ENCODE measurements at regions of chr5 and their contacts with region 1.

Region 1: DNA sequence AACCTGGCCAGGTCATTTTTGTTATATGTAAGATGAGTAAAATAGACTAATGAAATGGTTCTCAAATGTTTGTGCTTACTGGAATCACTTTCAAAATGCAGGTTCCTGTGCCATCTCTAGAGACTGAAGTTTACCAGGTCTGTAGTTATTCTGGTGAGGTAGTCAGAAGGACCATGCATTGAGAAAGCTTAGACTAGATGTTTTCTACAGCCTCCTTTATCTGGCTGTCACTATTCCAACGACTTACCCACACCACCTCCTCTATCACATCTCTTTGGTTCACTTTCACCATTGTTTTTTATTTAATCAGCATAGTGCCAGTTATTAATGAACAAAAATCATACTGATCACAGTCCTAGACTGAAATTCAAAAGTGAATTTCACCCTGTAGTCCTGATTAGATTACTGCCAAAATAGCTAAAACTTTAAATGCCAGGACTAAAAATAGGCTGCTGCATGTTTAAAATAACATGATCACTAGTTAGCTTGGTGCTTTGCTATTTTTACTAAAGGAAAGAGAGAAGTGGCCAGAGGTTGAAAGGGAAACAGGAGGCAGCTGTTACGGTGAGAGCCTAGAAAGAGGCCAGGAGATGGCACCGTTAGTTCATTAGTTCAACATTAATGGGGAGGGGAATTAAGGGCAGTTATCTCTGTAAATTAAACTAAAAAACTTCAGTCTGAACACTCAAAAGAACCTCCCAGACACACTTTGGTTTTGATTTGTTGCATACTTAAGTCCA is 13.9 kb upstream of the FNIP1 start:
- DNase-seq: peak; percentile 29
- ATAC-seq: peak; percentile 76
- H3K4me3 ChIP-seq: no peak overlapping the region
- H3K27ac ChIP-seq: no peak overlapping the region
- H3K4me1 ChIP-seq: peaks cover 0 to 9% of the 10 kb centered on the region in 2 experiments; a peak in 2 of 4 replicates
- H3K27me3 ChIP-seq: no peaks in the 10 kb centered on the region
- CTCF ChIP-seq: peak; percentile 27 to 77 (median 53); a peak in 4 of 6 replicates
- POLR2A ChIP-seq: no peak
- RAD21 ChIP-seq: peak; percentile 85

Region 2: DNA sequence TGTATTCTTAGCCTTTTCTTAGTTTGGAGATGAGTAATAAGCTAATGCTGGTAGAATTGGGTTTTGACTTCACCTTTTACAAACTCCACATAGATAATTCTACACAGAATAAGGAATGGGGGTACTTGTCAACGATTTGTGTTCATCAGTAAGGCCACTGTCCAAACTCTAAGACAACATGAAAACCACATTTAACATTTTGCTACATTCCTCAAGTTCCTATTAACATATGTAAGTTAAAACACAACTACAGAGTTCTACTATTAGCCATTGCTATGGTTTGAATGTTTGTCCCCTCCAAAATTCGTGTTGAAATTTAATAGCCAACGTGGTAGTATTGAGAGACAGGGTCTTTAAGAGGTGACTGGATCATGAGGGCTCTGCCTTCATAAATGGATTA is 102.9 kb after region 1 on chr5:
- CTCF ChIA-PET with region 1: no interaction called
- POLR2A ChIA-PET with region 1: no interaction called
- RAD21 ChIA-PET with region 1: no interaction called
- intact Hi-C with region 1: no loop called
- DNase-seq: no peak
- ATAC-seq: no peak
- H3K4me3 ChIP-seq: no peak overlapping the region
- H3K27ac ChIP-seq: no peak overlapping the region
- H3K4me1 ChIP-seq: no peaks in the 10 kb centered on the region
- H3K27me3 ChIP-seq: no peaks in the 10 kb centered on the region
- CTCF ChIP-seq: no peak
- POLR2A ChIP-seq: no peak
- RAD21 ChIP-seq: no peak

Region 3: DNA sequence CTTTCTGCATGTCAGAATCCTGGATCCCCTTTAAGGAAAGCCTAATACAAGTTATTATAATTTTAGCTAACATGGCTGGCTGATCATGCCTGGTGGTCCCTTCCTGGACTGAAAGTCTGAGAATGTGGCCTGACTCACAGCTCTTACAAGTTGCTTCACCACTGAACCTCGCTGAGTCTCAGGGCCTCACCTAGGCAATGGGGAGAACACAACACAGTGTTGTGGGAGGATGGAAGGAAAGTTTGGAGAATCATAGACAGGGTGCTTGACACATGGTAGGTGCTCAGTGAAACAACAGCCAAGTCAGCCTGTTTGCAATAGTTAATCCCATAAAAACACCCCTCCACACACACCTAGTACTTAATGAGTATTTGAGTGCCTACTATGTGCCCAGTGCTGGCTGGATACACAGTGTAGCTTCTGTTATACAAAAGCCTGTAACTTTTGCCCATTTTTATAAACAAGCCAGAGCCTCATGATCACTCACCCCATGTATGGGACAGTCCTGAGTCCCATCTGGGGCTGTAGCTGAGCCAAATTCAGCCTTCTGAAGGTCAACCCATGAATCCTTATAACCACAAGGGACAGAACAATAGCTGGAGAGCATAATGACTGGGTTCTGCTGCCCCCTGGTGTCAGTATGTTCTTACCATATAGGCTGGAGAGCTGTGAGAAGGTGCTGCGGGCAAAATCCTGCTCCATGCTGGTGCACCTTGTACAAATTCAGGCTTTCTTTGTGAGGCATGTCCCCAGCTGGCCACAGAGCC is 196.9 kb after region 1 on chr5:
- CTCF ChIA-PET with region 1: interaction called, 70 read pairs
- POLR2A ChIA-PET with region 1: no interaction called
- RAD21 ChIA-PET with region 1: interaction called, 6 to 13 read pairs
- intact Hi-C with region 1: loop called (anchors 1 kb)
- DNase-seq: peak; percentile 72
- ATAC-seq: peak; percentile 84
- H3K4me3 ChIP-seq: no peak overlapping the region
- H3K27ac ChIP-seq: no peak overlapping the region
- H3K4me1 ChIP-seq: peaks cover 0 to 7% of the 10 kb centered on the region in 2 experiments; a peak in 2 of 4 replicates
- H3K27me3 ChIP-seq: no peaks in the 10 kb centered on the region
- CTCF ChIP-seq: peak; percentile 74 to 88 (median 74)
- POLR2A ChIP-seq: no peak
- RAD21 ChIP-seq: peak; percentile 95

Region 4: DNA sequence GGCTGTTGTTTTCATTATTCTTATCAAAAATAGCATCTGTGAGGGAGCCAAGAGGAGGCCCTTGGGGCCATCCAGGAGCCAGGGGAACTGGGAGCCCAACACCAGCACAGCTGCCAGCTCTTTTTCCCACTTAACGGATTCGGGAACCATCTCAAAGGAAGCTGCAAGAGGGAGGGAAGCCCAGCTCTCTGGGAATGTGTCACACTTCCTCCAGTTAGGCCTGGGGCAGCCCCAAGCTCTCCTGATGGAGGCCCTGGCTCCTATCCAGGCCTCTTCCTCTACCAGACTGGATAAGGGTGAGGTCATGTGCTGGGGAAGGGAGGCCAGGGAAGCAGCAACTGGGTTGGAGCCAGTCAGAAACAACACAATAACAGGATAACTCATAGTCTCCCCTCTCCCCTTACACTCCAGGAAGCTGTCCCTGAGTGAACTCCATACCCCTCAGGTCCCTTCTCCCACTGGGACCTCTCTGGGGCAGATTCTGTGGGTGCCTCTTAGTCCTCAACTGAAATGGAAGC is 275.7 kb after region 1 on chr5:
- CTCF ChIA-PET with region 1: no interaction called
- POLR2A ChIA-PET with region 1: no interaction called
- RAD21 ChIA-PET with region 1: no interaction called
- intact Hi-C with region 1: no loop called
- DNase-seq: no peak
- ATAC-seq: no peak
- H3K4me3 ChIP-seq: no peak overlapping the region
- H3K27ac ChIP-seq: no peak overlapping the region
- H3K4me1 ChIP-seq: peaks cover 7 to 18% of the 10 kb centered on the region in 2 experiments; a peak in 3 of 4 replicates
- H3K27me3 ChIP-seq: no peaks in the 10 kb centered on the region
- CTCF ChIP-seq: no peak
- POLR2A ChIP-seq: no peak
- RAD21 ChIP-seq: no peak